Activated T-helper 1 cell treated with anti-CD3 and anti-CD28 coated beads, Interleukin-12 subunit alpha, Interleukin-12 subunit beta, Interleukin-2, Interleukin-4 antibody, amounts not matched to agents 30 ng/mL and 10 ng/mL and 1 ng/mL, durations not matched to agents 14 hours and 24 hours and 36 hours (primary cell): ENCODE measurements at regions of chr11 and their contacts with region 1.

Region 1: GRCh38 chr11:120929664-120930154 is 94.2 kb upstream of the TBCEL start:
- DNase-seq: peak; percentile 9
- H3K4me3 Mint-ChIP-seq: no peak overlapping the region
- H3K27ac Mint-ChIP-seq: no peak overlapping the region
- H3K4me1 Mint-ChIP-seq: no peaks in the 10 kb centered on the region
- H3K27me3 Mint-ChIP-seq: peaks cover 2% of the 10 kb centered on the region

Region 2: GRCh38 chr11:120527111-120527761 is 402.5 kb before region 1 on chr11:
- intact Hi-C with region 1: no loop called
- DNase-seq: no peak
- H3K4me3 Mint-ChIP-seq: no peak overlapping the region
- H3K27ac Mint-ChIP-seq: no peak overlapping the region
- H3K4me1 Mint-ChIP-seq: no peaks in the 10 kb centered on the region
- H3K27me3 Mint-ChIP-seq: peaks cover 13% of the 10 kb centered on the region

Region 3: DNA sequence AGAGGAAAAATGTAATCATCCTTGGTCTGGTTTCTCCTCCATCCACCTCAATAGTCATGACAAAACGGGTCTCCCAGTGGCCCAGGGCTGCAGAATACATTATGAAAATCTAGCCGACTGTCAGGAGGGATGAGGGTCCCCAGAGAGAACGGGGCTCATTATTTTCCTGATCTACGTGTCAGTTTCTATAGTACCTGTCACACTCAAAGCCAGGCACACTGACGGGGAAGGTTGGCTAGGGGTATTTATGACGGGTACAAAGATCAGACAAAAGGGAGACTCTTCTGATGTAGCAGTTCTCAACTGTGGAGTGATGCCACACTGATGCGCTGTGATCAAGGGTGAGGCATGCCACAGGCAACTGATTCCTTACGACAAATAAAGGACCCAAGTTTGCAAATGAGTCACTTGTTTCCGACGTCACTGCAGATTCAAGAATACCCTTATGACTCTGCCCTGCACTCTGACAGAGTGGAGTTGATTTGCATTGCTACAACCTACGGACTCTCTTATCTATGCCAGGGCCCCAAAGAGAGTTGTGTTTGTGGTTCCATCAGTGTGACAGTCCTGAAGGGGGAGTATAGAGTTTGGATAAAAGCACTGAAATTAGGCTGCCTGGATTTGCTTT is 94.0 kb before region 1 on chr11:
- intact Hi-C with region 1: loop called (anchors 5 kb)
- DNase-seq: no peak
- H3K4me3 Mint-ChIP-seq: no peak overlapping the region
- H3K27ac Mint-ChIP-seq: no peak overlapping the region
- H3K4me1 Mint-ChIP-seq: peaks cover 10% of the 10 kb centered on the region
- H3K27me3 Mint-ChIP-seq: peaks cover 9% of the 10 kb centered on the region

Region 4: GRCh38 chr11:120883404-120884080 is 46.2 kb before region 1 on chr11:
- intact Hi-C with region 1: no loop called
- DNase-seq: no peak
- H3K4me3 Mint-ChIP-seq: no peak overlapping the region
- H3K27ac Mint-ChIP-seq: no peak overlapping the region
- H3K4me1 Mint-ChIP-seq: no peaks in the 10 kb centered on the region
- H3K27me3 Mint-ChIP-seq: peaks cover 6% of the 10 kb centered on the region

Region 5: DNA sequence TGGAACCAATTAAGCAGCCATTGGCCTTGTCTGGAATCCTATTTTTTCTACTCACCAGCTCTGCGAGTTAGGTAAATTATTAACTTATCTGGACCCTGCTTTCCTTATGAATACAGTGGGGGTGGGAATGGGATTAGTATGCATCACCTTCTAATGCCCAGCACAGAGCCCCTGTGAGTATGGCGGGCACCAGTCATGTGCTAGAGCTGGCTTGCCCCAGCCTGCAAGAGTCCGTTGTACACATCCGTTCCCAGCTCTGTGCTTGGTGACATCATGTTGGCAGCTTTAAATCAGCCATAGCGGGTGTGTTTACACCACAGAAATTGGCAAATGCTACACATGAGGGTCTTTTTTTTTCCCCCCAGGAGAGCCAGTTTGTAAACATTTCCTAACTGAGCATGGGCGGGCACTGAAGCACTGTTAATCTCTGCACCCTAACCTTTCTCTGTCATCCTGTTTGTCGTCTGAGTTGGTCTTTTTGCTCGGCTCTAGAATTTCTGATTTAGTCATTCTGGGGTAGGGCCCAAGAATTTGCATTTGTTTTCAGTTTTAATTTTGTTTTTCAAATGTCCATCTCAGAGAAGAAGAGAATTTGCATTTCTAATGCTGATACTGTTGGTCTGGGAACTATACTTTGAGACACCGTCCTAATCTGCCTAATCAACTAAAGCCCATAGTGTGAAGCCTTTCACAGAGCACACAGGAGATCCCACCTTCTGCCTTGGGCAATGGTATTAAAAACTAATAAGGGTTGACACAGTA is 36.1 kb before region 1 on chr11:
- intact Hi-C with region 1: no loop called
- DNase-seq: no peak
- H3K4me3 Mint-ChIP-seq: no peak overlapping the region
- H3K27ac Mint-ChIP-seq: no peak overlapping the region
- H3K4me1 Mint-ChIP-seq: no peaks in the 10 kb centered on the region
- H3K27me3 Mint-ChIP-seq: peaks cover 4% of the 10 kb centered on the region

Region 6: GRCh38 chr11:121063728-121064127 is 134.0 kb after region 1 on chr11:
- intact Hi-C with region 1: no loop called
- DNase-seq: no peak
- H3K4me3 Mint-ChIP-seq: no peak overlapping the region
- H3K27ac Mint-ChIP-seq: no peak overlapping the region
- H3K4me1 Mint-ChIP-seq: peaks cover 11% of the 10 kb centered on the region
- H3K27me3 Mint-ChIP-seq: no peaks in the 10 kb centered on the region

Region 7: GRCh38 chr11:121112498-121113455 is 183.1 kb after region 1 on chr11:
- intact Hi-C with region 1: loop called (anchors 2 kb)
- DNase-seq: peak; percentile 14
- H3K4me3 Mint-ChIP-seq: no peak overlapping the region
- H3K27ac Mint-ChIP-seq: no peak overlapping the region
- H3K4me1 Mint-ChIP-seq: no peaks in the 10 kb centered on the region
- H3K27me3 Mint-ChIP-seq: peaks cover 20% of the 10 kb centered on the region

Region 8: GRCh38 chr11:121194731-121195596 is 265.3 kb after region 1 on chr11:
- intact Hi-C with region 1: loop called (anchors 1 kb)
- DNase-seq: peak; percentile 34
- H3K4me3 Mint-ChIP-seq: no peak overlapping the region
- H3K27ac Mint-ChIP-seq: no peak overlapping the region
- H3K4me1 Mint-ChIP-seq: peaks cover 7% of the 10 kb centered on the region
- H3K27me3 Mint-ChIP-seq: peaks cover 16% of the 10 kb centered on the region